ENCODE measurements at regions of chr16 and their contacts with region 1.

Region 1: GRCh38 chr16:74709441-74709877 is 8.8 kb upstream of the MLKL start:
- DNase-seq: peak; percentile 85
- H3K4me3 Mint-ChIP-seq: no peak overlapping the region
- H3K27ac Mint-ChIP-seq: no peak overlapping the region
- H3K4me1 Mint-ChIP-seq: peaks cover 11% of the 10 kb centered on the region
- H3K27me3 Mint-ChIP-seq: peaks cover 5% of the 10 kb centered on the region

Region 2: GRCh38 chr16:74695450-74696422 is 13.7 kb before region 1 on chr16:
- CTCF ChIA-PET with region 1: interaction called, 12 read pairs
- POLR2A ChIA-PET with region 1: interaction called, 11 read pairs
- DNase-seq: peak; percentile 75
- H3K4me3 Mint-ChIP-seq: peak overlapping the region; percentile 73
- H3K27ac Mint-ChIP-seq: peak overlapping the region; percentile 73
- H3K4me1 Mint-ChIP-seq: peaks cover 52% of the 10 kb centered on the region
- H3K27me3 Mint-ChIP-seq: no peaks in the 10 kb centered on the region

Region 3: DNA sequence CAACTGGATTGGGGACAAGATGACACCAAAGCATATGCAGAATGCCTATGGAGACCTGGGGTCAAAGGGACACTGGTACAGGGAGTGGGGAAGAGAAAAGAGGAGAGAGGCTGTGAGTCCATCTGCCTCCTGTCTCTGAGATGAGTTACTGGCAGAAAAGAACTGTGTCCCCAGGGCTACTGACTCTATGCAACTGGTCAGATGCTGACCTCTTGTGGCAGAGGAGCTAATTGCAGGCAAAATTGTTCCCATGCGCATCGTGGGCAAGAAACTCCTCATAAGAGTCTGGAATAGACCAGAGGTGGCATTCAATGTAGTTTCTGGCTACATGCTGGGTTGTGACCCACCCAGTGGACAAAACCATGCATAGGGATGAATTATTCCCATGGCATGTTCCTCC is 17.3 kb after region 1 on chr16:
- CTCF ChIA-PET with region 1: interaction called, 19 read pairs
- POLR2A ChIA-PET with region 1: no interaction called
- DNase-seq: peak; percentile 37
- H3K4me3 Mint-ChIP-seq: no peak overlapping the region
- H3K27ac Mint-ChIP-seq: no peak overlapping the region
- H3K4me1 Mint-ChIP-seq: peaks cover 8% of the 10 kb centered on the region
- H3K27me3 Mint-ChIP-seq: no peaks in the 10 kb centered on the region

Region 4: DNA sequence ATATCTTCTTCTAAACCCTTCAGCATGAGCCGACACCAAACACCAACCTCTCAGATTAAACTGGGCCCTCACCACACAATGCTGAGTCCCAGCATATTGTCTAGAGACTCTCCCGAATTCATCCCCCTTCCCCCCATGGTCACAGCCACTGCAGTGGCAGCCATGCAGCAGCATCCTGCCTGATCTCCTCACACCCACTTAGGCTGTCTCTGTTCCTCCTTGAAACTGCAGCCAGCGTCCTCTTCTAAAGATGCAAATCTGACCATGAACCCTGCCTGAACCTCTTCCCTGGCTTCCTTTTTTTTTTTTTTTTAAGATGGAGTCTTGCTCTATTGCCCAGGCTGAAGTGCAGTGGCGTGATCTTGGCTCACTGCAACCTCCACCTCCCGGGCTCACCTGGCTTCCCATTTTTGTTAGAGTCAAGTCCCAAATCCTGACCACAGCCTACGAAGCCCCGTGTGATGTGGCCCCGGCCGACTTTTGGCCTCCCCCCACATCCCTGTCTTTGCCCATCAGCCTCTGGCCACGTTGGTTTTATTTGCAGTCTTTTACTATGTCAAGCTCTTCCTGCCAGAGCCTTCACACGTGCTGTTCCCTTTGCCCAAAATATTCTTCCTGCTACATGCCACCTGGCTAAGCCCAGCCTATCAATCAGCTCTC is 62.3 kb after region 1 on chr16:
- CTCF ChIA-PET with region 1: no interaction called
- POLR2A ChIA-PET with region 1: no interaction called
- DNase-seq: no peak
- H3K4me3 Mint-ChIP-seq: no peak overlapping the region
- H3K27ac Mint-ChIP-seq: peak overlapping the region; percentile 71
- H3K4me1 Mint-ChIP-seq: peaks cover 19% of the 10 kb centered on the region
- H3K27me3 Mint-ChIP-seq: peaks cover 44% of the 10 kb centered on the region

Region 5: GRCh38 chr16:75074920-75075687 is 365.6 kb after region 1 on chr16:
- CTCF ChIA-PET with region 1: no interaction called
- POLR2A ChIA-PET with region 1: no interaction called
- DNase-seq: peak; percentile 94
- H3K4me3 Mint-ChIP-seq: peak overlapping the region; percentile 33
- H3K27ac Mint-ChIP-seq: peak overlapping the region; percentile 87
- H3K4me1 Mint-ChIP-seq: peaks cover 58% of the 10 kb centered on the region
- H3K27me3 Mint-ChIP-seq: no peaks in the 10 kb centered on the region